Esophagus muscularis mucosa (tissue), 4 donors: ENCODE measurements at regions of chr18 and their contacts with region 1.

Region 1: DNA sequence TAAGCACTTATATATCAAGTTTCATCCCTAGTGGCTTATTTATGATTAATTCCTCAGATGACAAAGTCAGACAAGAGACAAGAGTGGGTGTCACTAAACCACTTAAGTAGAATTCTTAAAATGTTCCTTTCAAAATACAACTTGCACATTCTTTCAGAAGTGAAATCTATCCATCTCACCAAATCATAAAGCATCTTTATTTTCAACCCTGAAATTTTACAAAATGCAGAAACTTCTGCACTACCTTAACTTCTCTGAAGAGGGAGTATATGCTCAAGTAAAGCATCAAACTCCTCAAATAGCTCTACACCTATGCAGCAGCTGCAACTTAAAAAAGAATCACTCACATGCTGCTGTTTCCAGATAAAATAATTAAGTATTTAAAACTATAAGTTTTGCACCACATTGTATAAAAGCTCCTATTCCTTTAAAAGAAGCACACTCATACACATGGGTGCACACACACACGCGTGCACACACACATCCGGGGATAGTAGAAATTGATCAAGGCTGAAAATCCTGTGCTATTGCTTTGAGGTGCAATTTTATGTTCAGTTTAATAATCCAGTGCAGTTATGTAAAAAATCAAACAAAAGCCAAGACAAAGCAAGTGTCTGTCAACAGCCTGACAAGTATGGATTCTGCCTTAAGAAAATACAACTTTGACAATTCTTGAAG is 244.5 kb downstream of the TCF4 start:
- DNase-seq: no peak
- H3K4me3 ChIP-seq: no peak overlapping the region
- H3K27ac ChIP-seq: no peak overlapping the region
- H3K4me1 ChIP-seq: peaks cover 6 to 24% (median 11%) of the 10 kb centered on the region in 4 donors
- H3K27me3 ChIP-seq: no peaks in the 10 kb centered on the region
- CTCF ChIP-seq: peak; percentile 49 to 64 (median 59)
- EP300 ChIP-seq: no peak
- POLR2A ChIP-seq: no peak

Region 2: GRCh38 chr18:56382541-56382940 is 1039.0 kb after region 1 on chr18:
- intact Hi-C with region 1: loop called (anchors 10 kb)
- DNase-seq: no peak
- H3K4me3 ChIP-seq: no peak overlapping the region
- H3K27ac ChIP-seq: no peak overlapping the region
- H3K4me1 ChIP-seq: peaks cover 0 to 4% (median 1%) of the 10 kb centered on the region in 4 donors
- H3K27me3 ChIP-seq: no peaks in the 10 kb centered on the region
- CTCF ChIP-seq: no peak
- EP300 ChIP-seq: no peak
- POLR2A ChIP-seq: no peak

Region 3: DNA sequence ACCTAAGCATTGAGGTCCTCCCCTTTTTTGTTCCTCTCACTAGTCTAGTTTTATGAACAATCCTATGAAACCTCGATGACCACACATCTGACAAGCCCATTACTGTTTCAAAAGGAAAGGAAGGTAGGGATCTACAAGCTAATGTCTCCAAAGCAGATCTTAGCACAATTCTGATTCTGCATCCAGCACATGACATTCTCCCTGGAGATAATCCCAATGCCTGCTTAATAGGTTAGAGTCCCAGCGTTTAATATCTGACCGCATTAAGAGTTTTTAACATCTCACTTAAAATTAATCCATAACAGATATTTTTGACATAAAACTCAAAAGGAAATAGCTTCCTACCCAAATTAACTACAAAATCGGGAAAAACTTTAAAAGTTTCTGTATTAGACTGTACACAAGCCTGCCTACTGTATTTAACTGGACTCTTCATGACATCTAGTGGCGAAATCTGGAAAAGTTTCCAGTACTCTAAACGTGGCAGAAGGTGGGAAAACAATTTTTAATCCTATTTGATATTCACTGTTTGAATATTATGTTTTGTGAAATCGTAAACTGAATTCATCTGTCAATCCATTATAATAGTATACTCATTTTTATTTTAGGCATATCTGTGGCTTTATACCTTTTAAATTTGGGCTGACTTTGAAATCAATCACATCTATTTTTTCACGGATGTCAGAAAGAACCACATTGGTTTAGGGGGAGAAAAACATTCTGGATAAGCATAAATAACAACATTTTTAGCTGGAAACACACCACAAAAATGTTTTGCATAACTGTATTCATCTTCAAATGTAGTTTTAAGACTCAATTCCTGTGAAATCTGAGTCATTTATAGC is 1232.5 kb after region 1 on chr18:
- intact Hi-C with region 1: loop called (anchors 10 kb)
- DNase-seq: no peak
- H3K4me3 ChIP-seq: no peak overlapping the region
- H3K27ac ChIP-seq: peak overlapping the region in 1 of 4 donors; percentile 45
- H3K4me1 ChIP-seq: peaks cover 17 to 28% (median 21%) of the 10 kb centered on the region in 4 donors
- H3K27me3 ChIP-seq: no peaks in the 10 kb centered on the region
- CTCF ChIP-seq: peak; percentile 71 to 77 (median 73)
- EP300 ChIP-seq: no peak
- POLR2A ChIP-seq: no peak